Mammary epithelial cell (primary cell): ENCODE measurements at regions of chr15 and their contacts with region 1.

Region 1: GRCh38 chr15:74816808-74817674 is 4.4 kb downstream of the LMAN1L start:
- DNase-seq: peak; percentile 77
- H3K4me3 ChIP-seq: no peak overlapping the region
- H3K27ac ChIP-seq: no peak overlapping the region
- H3K4me1 ChIP-seq: peaks cover 22% of the 10 kb centered on the region
- H3K27me3 ChIP-seq: no peaks in the 10 kb centered on the region
- CTCF ChIP-seq: peak; percentile 30 to 78

Region 2: DNA sequence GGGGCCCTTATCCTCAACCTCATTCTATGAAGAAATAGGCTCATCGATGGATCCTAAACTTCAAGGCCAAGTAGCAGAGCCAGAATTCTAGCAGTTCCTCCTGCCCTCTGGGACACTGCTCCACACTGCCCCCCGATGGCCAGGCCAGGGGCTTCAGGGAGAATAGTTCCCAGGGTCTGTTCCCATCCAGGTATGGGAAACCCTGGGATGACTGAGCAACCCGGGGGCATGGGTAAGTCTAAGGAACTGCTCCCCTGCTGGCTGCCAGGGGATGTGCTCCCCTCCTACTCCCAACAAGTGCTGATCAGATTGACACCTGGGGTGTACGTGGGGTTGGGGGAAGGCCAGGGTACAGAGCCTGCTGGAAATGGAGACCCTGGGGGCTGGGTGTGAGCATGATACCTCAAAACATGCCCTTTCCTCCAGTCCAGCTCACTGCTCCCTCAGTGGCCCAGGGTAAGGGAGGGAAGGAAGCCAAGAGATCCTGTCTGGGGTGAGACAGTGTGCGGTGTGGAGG is 18.3 kb after region 1 on chr15:
- CTCF ChIA-PET with region 1: no interaction called
- dilution Hi-C with region 1: no loop called
- in situ Hi-C with region 1: no loop called
- intact Hi-C with region 1: loop called (anchors 1 kb)
- DNase-seq: peak; percentile 70
- H3K4me3 ChIP-seq: no peak overlapping the region
- H3K27ac ChIP-seq: no peak overlapping the region
- H3K4me1 ChIP-seq: no peaks in the 10 kb centered on the region
- H3K27me3 ChIP-seq: no peaks in the 10 kb centered on the region
- CTCF ChIP-seq: peak; percentile 84 to 98

Region 3: DNA sequence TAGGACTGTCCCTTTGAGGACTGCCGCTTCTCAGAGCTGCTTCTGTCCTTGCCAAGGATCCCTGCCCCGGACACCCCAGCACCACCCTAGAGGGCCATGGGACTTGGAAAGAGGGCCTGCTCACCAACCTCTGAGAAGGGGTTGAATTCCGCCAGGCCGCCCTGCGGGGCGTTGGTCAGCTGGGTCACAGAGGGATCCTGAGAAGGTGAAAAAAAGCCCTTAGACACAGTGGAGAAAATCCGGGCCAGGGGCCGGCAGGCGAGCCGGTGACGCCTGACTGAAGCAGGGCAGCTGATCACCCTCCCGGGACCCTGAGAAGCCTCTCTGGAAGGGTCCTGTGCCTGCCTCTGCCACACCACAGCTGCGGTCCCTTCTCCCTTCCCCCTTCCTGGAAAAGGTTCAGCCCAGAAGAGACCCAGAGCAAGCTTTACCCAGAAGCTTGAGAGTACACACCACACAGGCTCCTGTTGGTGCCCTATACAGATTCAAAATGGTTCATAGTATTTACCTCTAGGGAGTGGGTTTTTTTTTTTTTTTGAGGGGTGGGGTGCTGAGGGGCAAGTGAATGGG is 37.5 kb after region 1 on chr15:
- CTCF ChIA-PET with region 1: no interaction called
- dilution Hi-C with region 1: loop called (anchors 5 kb)
- in situ Hi-C with region 1: no loop called
- intact Hi-C with region 1: no loop called
- DNase-seq: no peak
- H3K4me3 ChIP-seq: no peak overlapping the region
- H3K27ac ChIP-seq: no peak overlapping the region
- H3K4me1 ChIP-seq: no peaks in the 10 kb centered on the region
- H3K27me3 ChIP-seq: no peaks in the 10 kb centered on the region
- CTCF ChIP-seq: no peak

Region 4: GRCh38 chr15:74906446-74907162 is 89.6 kb after region 1 on chr15 and contains the start of gene FAM219B:
- CTCF ChIA-PET with region 1: interaction called, 3 read pairs
- dilution Hi-C with region 1: no loop called
- in situ Hi-C with region 1: no loop called
- intact Hi-C with region 1: loop called (anchors 1 kb)
- DNase-seq: peak; percentile 76
- H3K4me3 ChIP-seq: peak within 1 kb of the TSS; percentile 81 to 97 (median 84)
- H3K27ac ChIP-seq: peak within 1 kb of the TSS; percentile 74
- H3K4me1 ChIP-seq: peaks cover 11% of the 10 kb centered on the region
- H3K27me3 ChIP-seq: no peaks in the 10 kb centered on the region
- CTCF ChIP-seq: peak in 1 of 2 donors; percentile 0
- total RNA-seq, gene FAM219B: 64.2 to 89.0 TPM